ENCODE measurements at regions of chr19 and their contacts with region 1.

Region 1: GRCh38 chr19:37172368-37173366 is at the start of gene ZNF585A:
- DNase-seq: peak; percentile 93
- ATAC-seq: peak; percentile 100
- H3K4me3 Mint-ChIP-seq: no peak within 1 kb of the TSS
- H3K27ac Mint-ChIP-seq: no peak within 1 kb of the TSS
- H3K4me1 Mint-ChIP-seq: no peaks in the 10 kb centered on the region
- H3K27me3 Mint-ChIP-seq: no peaks in the 10 kb centered on the region
- total RNA-seq, gene ZNF585A: 7.9 TPM

Region 2: DNA sequence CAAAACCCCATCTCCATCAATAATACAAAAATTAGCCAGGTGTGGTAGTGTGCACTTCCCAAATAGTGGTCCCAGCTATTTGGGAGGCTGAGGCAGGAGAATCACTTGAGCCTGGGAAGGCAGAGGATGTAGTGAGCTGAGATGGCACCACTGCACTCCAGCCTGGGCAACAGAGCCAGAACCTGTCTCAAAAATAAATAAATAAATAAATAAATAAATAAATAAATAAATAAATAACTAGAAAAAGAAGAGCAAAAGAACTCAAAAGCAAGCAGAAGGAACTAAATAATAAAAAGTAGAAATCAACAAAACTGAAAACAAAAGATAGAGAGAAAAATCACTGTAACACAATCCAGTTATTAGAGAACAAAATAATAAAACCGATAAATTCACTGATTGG is 12.5 kb before region 1 on chr19:
- CTCF ChIA-PET with region 1: no interaction called
- POLR2A ChIA-PET with region 1: no interaction called
- DNase-seq: no peak
- ATAC-seq: no peak
- H3K4me3 Mint-ChIP-seq: no peak overlapping the region
- H3K27ac Mint-ChIP-seq: no peak overlapping the region
- H3K4me1 Mint-ChIP-seq: no peaks in the 10 kb centered on the region
- H3K27me3 Mint-ChIP-seq: no peaks in the 10 kb centered on the region

Region 3: DNA sequence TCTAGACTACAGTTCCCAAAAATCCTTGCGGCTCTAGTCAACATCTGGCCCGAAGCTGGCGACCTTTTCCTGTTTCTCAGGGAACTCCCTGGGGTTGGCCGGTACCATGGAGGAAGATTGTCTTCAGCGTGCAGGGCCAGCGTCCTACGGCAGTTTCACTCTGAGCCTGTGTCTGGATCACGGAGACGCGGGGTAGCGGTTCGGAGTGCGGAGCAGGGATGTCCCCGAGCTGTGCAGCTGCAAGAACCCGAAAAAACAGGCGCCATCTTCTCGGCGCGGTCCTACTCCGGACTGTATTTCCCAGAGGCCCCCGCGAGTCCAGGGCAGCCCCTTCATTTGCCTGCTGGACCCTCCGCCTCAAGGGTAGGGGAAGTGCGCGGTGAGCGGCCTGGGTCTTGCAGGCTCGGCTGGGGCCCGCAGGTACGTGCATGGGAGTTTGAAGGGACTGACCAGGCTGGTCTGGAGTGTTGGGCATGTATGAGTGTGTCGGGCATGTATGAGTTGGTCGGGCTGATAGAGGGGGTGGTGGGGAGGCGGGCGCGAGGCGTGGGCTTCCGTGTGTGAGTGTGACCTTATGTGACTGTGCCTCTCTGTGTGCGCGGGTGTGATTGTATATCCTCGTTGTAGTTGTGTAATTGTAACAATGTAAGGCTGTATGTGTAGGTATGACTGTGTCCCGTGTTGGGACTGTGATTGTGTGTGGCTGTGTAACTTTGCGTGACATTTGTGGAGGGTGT is 45.4 kb after region 1 on chr19 and contains the start of gene ZNF383:
- CTCF ChIA-PET with region 1: interaction called, 3 read pairs
- POLR2A ChIA-PET with region 1: interaction called, 11 read pairs
- DNase-seq: peak; percentile 90
- ATAC-seq: peak; percentile 92
- H3K4me3 Mint-ChIP-seq: peak within 1 kb of the TSS; percentile 91
- H3K27ac Mint-ChIP-seq: peak within 1 kb of the TSS; percentile 95
- H3K4me1 Mint-ChIP-seq: peaks cover 24% of the 10 kb centered on the region
- H3K27me3 Mint-ChIP-seq: no peaks in the 10 kb centered on the region
- total RNA-seq, gene ZNF383: 10.5 to 11.2 TPM